ENCODE measurements at regions of chr11 and their contacts with region 1.

Region 1: GRCh38 chr11:66069715-66070603 is at the start of gene PACS1:
- DNase-seq: peak; percentile 82
- H3K4me3 Mint-ChIP-seq: peak within 1 kb of the TSS; percentile 92
- H3K27ac Mint-ChIP-seq: peak within 1 kb of the TSS; percentile 93
- H3K4me1 Mint-ChIP-seq: peaks cover 63% of the 10 kb centered on the region
- H3K27me3 Mint-ChIP-seq: no peaks in the 10 kb centered on the region
- total RNA-seq, gene PACS1: 86.4 to 95.0 TPM

Region 2: GRCh38 chr11:65927904-65928397 is 142.0 kb before region 1 on chr11:
- CTCF ChIA-PET with region 1: no interaction called
- POLR2A ChIA-PET with region 1: no interaction called
- DNase-seq: peak; percentile 87
- H3K4me3 Mint-ChIP-seq: peak overlapping the region; percentile 69
- H3K27ac Mint-ChIP-seq: peak overlapping the region; percentile 95
- H3K4me1 Mint-ChIP-seq: peaks cover 48% of the 10 kb centered on the region
- H3K27me3 Mint-ChIP-seq: no peaks in the 10 kb centered on the region

Region 3: DNA sequence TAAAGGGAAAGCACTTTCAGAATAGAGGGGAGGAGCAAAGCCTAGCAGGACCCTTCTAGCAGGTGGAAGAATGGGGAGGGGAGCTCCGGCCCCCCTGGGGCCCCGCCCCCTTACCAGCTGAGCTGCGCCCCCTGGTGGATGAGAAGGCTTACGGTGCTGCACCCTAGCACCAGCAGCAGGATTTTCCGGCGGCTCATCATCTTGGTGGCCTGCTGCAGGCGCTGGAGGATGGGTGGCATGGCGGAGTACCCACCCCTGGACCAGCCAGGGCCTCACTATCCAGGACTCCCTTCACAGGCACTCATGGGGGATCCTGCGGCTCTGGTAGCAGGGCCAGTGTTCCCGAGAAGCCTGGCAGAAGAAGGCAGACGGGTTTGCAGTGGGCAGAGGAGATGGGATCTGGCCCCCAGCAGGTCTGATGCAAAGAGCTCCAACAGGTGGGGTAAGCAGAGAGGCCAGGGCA is 24.8 kb before region 1 on chr11:
- CTCF ChIA-PET with region 1: interaction called, 13 read pairs
- POLR2A ChIA-PET with region 1: interaction called, 103 read pairs
- DNase-seq: peak; percentile 84
- H3K4me3 Mint-ChIP-seq: peak overlapping the region; percentile 14
- H3K27ac Mint-ChIP-seq: peak overlapping the region; percentile 13
- H3K4me1 Mint-ChIP-seq: peaks cover 16% of the 10 kb centered on the region
- H3K27me3 Mint-ChIP-seq: peaks cover 4% of the 10 kb centered on the region

Region 4: DNA sequence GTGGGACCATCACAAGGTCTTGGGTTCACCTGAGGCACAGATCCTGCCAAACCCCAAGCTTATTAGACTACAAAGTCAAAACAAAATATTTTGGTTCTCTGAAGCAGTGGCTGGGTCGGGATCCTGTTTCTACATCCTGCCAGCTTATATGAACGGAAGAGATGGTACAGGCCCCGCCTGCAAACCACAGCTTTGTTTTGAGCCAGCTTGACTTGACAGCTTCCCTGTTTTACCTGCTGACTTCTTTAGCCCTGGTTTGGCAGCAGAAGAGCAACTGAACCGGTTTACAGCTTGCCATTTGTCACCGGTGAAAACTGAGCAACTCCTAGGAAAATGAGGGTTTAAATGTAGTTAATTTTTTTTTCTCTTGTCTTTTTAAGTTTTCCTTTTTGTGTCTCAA is 11.5 kb after region 1 on chr11:
- CTCF ChIA-PET with region 1: interaction called, 49 read pairs
- POLR2A ChIA-PET with region 1: interaction called, 88 read pairs
- DNase-seq: peak; percentile 87
- H3K4me3 Mint-ChIP-seq: peak overlapping the region; percentile 83
- H3K27ac Mint-ChIP-seq: peak overlapping the region; percentile 100
- H3K4me1 Mint-ChIP-seq: peaks cover 65% of the 10 kb centered on the region
- H3K27me3 Mint-ChIP-seq: no peaks in the 10 kb centered on the region

Region 5: DNA sequence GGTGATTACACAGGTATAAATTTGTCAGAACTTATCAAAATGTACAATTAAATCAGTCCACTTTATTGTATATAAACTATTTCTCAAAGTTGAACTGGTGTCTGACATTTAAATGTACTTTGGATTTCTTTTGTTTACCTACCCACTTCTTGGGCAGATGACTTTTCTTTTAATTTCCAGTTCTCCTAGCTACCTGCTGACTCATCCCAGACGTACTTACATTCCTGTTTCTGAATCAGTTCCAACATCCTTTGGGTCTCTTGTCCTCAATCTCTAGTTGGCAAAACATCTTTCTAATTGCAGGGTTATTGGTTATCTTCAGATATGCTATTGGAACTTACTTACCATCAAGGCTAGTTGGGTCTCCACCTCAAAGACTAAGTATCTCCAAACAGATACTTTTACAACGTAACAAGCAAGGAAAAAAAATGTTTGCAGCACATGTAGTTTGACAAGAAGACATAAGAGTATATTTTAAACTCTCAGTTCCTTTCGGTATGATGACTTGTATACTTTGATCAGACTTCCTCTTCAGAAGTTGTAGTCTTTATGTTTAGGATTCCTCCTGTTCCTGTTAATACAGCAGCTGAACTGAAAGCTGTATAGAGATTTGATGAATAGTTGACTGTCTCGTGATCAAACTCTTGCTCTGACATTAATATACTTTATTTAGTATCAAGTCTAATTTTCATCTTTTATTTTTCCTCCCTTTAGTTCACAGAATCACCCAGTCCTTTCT is 43.3 kb after region 1 on chr11:
- CTCF ChIA-PET with region 1: interaction called, 27 read pairs
- POLR2A ChIA-PET with region 1: interaction called, 18 read pairs
- DNase-seq: no peak
- H3K4me3 Mint-ChIP-seq: peak overlapping the region; percentile 31
- H3K27ac Mint-ChIP-seq: peak overlapping the region; percentile 74
- H3K4me1 Mint-ChIP-seq: peaks cover 82% of the 10 kb centered on the region
- H3K27me3 Mint-ChIP-seq: no peaks in the 10 kb centered on the region

Region 6: DNA sequence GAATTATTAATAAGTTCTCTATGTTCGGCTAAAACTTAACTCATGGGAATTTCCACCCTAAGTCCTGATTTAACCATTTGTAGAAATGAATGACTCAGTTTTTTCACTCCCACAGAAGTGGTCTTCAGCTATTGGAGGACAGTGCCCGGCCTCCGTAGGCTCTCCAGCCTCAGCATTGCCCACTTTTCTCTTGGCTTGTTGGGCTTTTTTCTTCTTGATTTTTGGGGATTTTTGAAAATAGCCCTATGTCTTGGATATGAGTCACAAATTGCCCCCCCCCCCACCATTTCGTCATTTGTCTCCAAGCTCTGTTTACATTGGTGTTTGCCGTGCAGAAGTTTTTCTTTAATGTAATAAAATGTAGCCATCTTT is 66.8 kb after region 1 on chr11:
- CTCF ChIA-PET with region 1: interaction called, 60 read pairs
- POLR2A ChIA-PET with region 1: interaction called, 3 read pairs
- DNase-seq: no peak
- H3K4me3 Mint-ChIP-seq: no peak overlapping the region
- H3K27ac Mint-ChIP-seq: no peak overlapping the region
- H3K4me1 Mint-ChIP-seq: peaks cover 26% of the 10 kb centered on the region
- H3K27me3 Mint-ChIP-seq: no peaks in the 10 kb centered on the region

Measured in activated CD4-positive, alpha-beta memory T cell treated with anti-CD3 and anti-CD28 coated beads, Interleukin-2, amount 10 ng/mL, durations not matched to agents 7 days and 5 days (primary cell).